ENCODE measurements at regions of chr9 and their contacts with region 1.

Region 1: GRCh38 chr9:92438900-92439526 is 14.7 kb upstream of the OMD start:
- DNase-seq: no peak
- H3K4me3 ChIP-seq: no peak overlapping the region
- H3K27ac ChIP-seq: no peak overlapping the region
- H3K4me1 ChIP-seq: peaks cover 0 to 14% of the 10 kb centered on the region in 2 donors
- H3K27me3 ChIP-seq: no peaks in the 10 kb centered on the region
- CTCF ChIP-seq: peak; percentile 18 to 55 (median 51)

Region 2: GRCh38 chr9:92191801-92192200 is 247.2 kb before region 1 on chr9:
- intact Hi-C with region 1: no loop called
- DNase-seq: no peak
- H3K4me3 ChIP-seq: no peak overlapping the region
- H3K27ac ChIP-seq: no peak overlapping the region
- H3K4me1 ChIP-seq: no peaks in the 10 kb centered on the region
- H3K27me3 ChIP-seq: no peaks in the 10 kb centered on the region
- CTCF ChIP-seq: no peak

Region 3: DNA sequence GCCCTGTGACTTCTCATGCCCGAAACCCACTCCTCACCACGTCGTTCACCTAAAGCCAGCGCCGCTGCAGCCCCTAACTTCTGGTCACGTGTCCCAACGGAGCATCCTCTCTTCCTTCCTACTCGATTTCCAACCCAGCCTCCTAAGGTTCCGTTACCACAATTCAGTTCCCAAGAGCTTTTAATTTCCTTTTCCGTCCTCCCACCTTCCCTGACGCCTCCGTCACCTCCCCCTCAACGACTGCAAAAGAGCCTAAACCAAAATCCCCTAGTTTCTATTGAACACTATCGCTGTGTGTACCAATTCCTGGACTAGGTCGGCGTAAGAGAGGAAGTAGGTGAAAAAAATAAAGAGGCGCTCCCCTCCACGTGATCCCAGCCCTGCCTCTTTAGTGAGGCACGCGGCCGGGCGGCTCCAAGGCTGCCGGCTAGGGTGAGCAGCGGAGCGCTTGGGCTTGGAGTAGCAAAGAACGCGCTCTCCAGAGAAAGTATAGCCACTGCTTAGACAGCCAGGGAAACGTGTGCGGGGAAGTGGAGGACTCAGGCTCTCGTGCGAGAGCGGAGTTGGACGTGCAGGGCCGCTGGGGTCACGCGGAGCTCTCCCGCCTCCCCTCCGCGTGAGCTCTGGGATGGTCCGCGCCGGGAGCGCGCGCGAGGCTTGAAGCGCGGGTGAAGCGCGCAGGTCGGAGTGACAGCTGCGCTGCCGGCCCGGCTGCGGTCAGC is 113.6 kb before region 1 on chr9 and contains the starts of genes CENPP and NOL8:
- intact Hi-C with region 1: loop called (anchors 2 kb)
- DNase-seq: peak; percentile 42 to 92
- H3K4me3 ChIP-seq: peak within 1 kb of the TSS; percentile 75 to 80
- H3K27ac ChIP-seq: peak within 1 kb of the TSS; percentile 93 to 97
- H3K4me1 ChIP-seq: peaks cover 0 to 16% of the 10 kb centered on the region in 2 donors
- H3K27me3 ChIP-seq: no peaks in the 10 kb centered on the region
- CTCF ChIP-seq: no peak
- total RNA-seq, gene CENPP: 0.43 TPM
- total RNA-seq, gene NOL8: 11.5 TPM

Region 4: GRCh38 chr9:92342825-92343488 is 96.1 kb before region 1 on chr9:
- intact Hi-C with region 1: loop called (anchors 2 kb)
- DNase-seq: no peak
- H3K4me3 ChIP-seq: no peak overlapping the region
- H3K27ac ChIP-seq: peak overlapping the region; percentile 45 to 72
- H3K4me1 ChIP-seq: peaks cover 0 to 3% of the 10 kb centered on the region in 2 donors
- H3K27me3 ChIP-seq: no peaks in the 10 kb centered on the region
- CTCF ChIP-seq: peak; percentile 25 to 55 (median 34)

Region 5: DNA sequence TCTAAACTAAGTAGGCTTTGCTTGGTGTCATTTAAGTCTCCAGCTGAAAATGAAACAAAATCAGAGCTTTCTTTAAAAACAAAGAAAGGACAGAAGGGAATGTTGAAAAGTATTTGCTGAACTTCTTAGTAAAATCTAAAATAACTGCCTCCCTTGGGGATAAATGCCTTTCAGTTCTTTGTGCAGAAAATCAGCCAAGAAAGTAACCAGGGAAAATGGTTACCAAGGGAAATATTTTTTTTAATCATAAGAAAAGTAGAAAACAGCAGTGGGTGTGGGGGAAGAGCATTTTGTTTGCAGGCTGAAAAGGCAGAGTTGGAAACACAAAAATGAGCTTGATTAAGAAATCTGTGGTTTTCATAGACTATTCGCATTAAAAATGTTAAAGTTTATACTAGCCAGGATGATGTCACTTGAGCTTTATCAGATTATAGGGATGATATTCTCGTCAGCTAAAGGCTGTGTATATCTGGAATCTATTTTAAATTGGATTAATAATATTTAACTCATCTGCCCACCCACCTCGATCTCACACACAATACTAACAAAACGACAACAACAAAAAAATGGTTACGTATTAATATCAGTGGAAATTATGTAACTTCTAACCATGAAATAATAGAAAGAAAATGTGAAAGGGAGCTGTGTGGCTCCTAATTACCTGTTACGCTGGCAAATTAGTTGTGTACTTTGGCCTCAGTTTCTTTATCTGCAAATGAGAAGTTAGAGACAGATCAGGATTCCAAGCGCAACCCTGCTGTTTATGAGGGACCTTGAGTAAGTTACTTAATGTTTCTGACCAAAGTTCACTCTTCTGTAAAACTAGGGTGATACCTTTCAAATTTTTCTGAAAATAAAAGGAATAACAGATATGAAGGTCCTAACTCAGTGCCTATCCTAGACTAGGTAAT is 97.2 kb after region 1 on chr9 and contains the start of gene ECM2:
- intact Hi-C with region 1: no loop called
- DNase-seq: no peak
- H3K4me3 ChIP-seq: peak within 1 kb of the TSS; percentile 55 to 56
- H3K27ac ChIP-seq: peak within 1 kb of the TSS; percentile 72
- H3K4me1 ChIP-seq: peaks cover 5 to 19% of the 10 kb centered on the region in 2 donors
- H3K27me3 ChIP-seq: no peaks in the 10 kb centered on the region
- CTCF ChIP-seq: no peak
- total RNA-seq, gene ECM2: 20.1 TPM